HepG2 (cell line): ENCODE measurements at regions of chr9 and their contacts with region 1.

Region 1: GRCh38 chr9:125024917-125025316 is 84.0 kb upstream of the GOLGA1 start:
- DNase-seq: no peak
- ATAC-seq: no peak
- H3K4me3 ChIP-seq: no peak overlapping the region
- H3K27ac ChIP-seq: no peak overlapping the region
- H3K4me1 ChIP-seq: no peaks in the 10 kb centered on the region
- H3K27me3 ChIP-seq: no peaks in the 10 kb centered on the region
- CTCF ChIP-seq: no peak
- EP300 ChIP-seq: no peak
- POLR2A ChIP-seq: no peak
- RAD21 ChIP-seq: no peak

Region 2: DNA sequence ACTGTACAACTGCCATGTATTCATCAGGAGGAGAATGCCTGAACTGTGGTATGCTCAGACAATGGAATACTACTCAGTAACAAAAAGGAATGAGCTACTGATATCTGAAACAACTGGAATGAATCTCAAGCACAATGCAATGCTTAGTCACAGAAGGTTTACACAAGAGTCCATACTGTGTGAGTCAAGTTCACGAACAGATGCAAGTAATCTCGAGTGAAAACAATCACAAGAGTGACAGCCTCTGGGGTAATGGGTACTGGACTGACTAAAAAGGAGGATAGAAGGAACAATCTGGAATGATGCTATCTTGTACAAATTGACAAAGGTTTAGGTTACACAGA is 64.5 kb before region 1 on chr9:
- CTCF ChIA-PET with region 1: no interaction called
- POLR2A ChIA-PET with region 1: no interaction called
- in situ Hi-C with region 1: no loop called
- intact Hi-C with region 1: no loop called
- DNase-seq: no peak
- ATAC-seq: no peak
- H3K4me3 ChIP-seq: no peak overlapping the region
- H3K27ac ChIP-seq: no peak overlapping the region
- H3K4me1 ChIP-seq: no peaks in the 10 kb centered on the region
- H3K27me3 ChIP-seq: no peaks in the 10 kb centered on the region
- CTCF ChIP-seq: no peak
- EP300 ChIP-seq: no peak
- POLR2A ChIP-seq: no peak
- RAD21 ChIP-seq: no peak

Region 3: DNA sequence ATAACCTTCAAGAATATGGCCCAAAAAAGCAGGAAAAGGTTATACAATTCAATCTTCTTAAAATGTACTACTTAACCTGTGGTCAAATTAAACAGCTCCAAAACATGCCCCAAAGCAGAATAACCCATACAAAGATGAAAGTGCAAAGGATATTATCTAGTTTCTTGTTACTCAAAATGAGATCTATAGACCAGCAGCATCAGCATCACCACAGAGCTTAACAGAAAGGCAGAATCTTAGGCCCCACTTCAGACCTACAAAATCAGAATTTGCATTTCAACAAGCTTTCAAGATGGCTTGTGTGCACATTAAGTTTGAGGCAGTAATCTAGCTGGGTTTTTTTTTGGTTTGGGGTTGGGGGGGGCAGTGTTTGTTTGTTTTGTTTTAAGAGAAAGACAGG is 64.4 kb after region 1 on chr9:
- CTCF ChIA-PET with region 1: no interaction called
- POLR2A ChIA-PET with region 1: no interaction called
- in situ Hi-C with region 1: loop called (anchors 10 kb)
- intact Hi-C with region 1: no loop called
- DNase-seq: peak; percentile 9
- ATAC-seq: no peak
- H3K4me3 ChIP-seq: no peak overlapping the region
- H3K27ac ChIP-seq: no peak overlapping the region
- H3K4me1 ChIP-seq: peaks cover 15% of the 10 kb centered on the region
- H3K27me3 ChIP-seq: no peaks in the 10 kb centered on the region
- CTCF ChIP-seq: no peak
- EP300 ChIP-seq: no peak
- POLR2A ChIP-seq: no peak
- RAD21 ChIP-seq: no peak

Region 4: GRCh38 chr9:125119643-125120286 is 94.8 kb after region 1 on chr9:
- CTCF ChIA-PET with region 1: no interaction called
- POLR2A ChIA-PET with region 1: no interaction called
- in situ Hi-C with region 1: no loop called
- intact Hi-C with region 1: no loop called
- DNase-seq: no peak
- ATAC-seq: no peak
- H3K4me3 ChIP-seq: no peak overlapping the region
- H3K27ac ChIP-seq: no peak overlapping the region
- H3K4me1 ChIP-seq: peaks cover 10% of the 10 kb centered on the region; the same call in 1 of the 2 replicates
- H3K27me3 ChIP-seq: no peaks in the 10 kb centered on the region
- CTCF ChIP-seq: no peak
- EP300 ChIP-seq: no peak
- POLR2A ChIP-seq: no peak
- RAD21 ChIP-seq: no peak